Sigmoid colon (tissue), 7 donors: ENCODE measurements at regions of chrX and their contacts with region 1.

Region 1: DNA sequence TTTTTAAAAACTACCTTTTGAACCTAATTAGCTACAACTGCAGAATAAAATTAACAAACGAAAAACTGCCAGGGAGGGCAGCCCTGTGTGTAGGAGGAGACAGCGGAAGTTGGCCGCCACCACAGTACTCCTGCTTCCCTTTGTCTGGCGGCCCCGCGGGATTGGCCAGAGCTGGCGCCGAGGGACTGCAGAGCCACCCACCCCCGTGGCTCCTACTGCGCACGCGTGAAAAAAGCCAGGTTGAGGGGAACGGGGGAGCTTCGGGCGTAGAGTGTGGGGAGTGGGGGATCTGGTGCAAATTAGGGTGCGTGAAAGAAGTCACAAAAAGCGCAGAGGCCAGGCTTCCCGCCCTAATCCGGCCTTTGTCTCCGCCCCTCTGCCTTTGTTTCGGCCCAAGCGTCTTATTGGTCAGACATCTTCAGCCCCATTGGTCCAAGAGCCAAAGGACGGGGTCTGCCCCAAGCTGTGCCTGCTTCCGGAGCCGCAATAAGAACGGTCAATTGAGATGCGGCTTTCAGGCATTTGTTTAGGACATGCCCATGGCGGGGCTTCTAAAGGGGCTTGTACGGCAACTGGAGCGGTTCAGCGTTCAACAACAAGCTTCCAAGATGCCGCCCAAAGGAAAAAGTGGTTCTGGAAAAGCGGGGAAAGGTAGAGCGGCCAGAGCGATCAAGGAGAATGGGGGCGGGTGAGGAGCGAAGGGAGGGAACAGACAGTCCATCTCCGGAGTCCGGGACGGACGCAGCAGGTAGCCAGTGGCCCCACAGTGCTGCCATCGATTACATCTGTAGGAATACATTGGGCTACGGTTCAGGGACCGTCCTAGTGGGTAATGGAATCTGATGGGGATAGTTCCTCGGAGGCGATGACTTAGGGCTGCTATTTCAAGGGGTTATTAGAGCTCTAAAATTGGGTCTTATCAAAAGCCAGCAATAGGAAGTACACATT is at the start of gene PIN4:
- DNase-seq: peak; percentile 96
- H3K4me3 ChIP-seq: peak within 1 kb of the TSS; percentile 59 to 70 (median 61)
- H3K27ac ChIP-seq: peak within 1 kb of the TSS; percentile 72 to 80 (median 78)
- H3K4me1 ChIP-seq: peaks cover 0 to 20% (median 8%) of the 10 kb centered on the region in 4 donors
- H3K27me3 ChIP-seq: no peaks in the 10 kb centered on the region
- CTCF ChIP-seq: no peak
- EP300 ChIP-seq: no peak
- POLR2A ChIP-seq: peak in 1 of 2 donors; percentile 14
- total RNA-seq, gene PIN4: 6.9 to 15.3 (median 8.3) TPM

Region 2: DNA sequence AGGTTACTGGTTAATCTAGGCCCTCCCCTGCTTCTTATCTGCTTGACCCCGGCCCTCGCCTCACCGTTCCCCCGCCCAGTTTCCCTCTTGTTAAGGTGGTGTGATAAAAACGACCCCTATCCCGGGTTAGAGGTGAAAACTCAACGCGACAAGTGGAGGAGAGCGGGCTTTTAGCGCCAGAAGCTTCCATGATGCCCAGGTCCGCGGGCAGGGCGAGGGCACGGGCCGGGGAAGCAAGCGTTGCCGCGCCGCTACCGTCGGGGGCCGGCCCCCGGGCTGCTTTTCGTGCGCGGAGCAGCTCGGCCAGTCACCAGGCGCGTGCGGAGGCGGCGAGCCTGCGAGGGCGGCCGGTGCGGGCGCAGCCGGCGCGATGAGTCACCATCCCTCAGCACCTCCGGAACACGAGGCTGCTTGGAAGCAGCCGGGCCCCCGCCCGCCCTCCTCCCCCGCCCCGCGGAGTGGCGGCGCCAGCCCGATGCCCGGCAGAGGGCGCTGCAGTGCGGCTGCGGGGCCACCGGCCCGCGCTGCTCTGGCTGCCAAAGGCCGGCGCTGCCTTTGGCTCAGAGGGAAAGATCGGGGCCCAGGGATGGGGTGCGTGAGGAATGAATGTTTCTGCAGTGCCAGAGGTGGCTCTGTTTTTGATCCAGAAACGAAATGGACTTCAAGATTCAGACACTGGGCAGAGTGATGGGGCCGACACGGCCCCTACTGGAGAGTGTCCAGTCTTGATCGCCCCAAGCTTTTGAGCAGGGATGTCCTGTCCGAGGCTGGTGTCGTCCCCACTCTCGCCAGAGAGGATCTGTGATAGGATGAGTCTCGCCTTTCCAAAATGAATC is 163.0 kb before region 1 on chrX:
- intact Hi-C with region 1: loop called (anchors 5 kb)
- DNase-seq: peak; percentile 94
- H3K4me3 ChIP-seq: peak overlapping the region in 3 of 4 donors; percentile 24 to 40 (median 25)
- H3K27ac ChIP-seq: peak overlapping the region; percentile 72 to 82 (median 78)
- H3K4me1 ChIP-seq: peaks cover 0 to 31% (median 18%) of the 10 kb centered on the region in 4 donors
- H3K27me3 ChIP-seq: no peaks in the 10 kb centered on the region
- CTCF ChIP-seq: peak in 2 of 4 experiments; percentile 24 to 74
- EP300 ChIP-seq: peak in 1 of 4 donors; percentile 25
- POLR2A ChIP-seq: no peak

Region 3: GRCh38 chrX:72100824-72101351 is 80.6 kb before region 1 on chrX:
- intact Hi-C with region 1: no loop called
- DNase-seq: no peak
- H3K4me3 ChIP-seq: no peak overlapping the region
- H3K27ac ChIP-seq: peak overlapping the region in 1 of 4 donors; percentile 7
- H3K4me1 ChIP-seq: peaks cover 0 to 11% (median 0%) of the 10 kb centered on the region in 4 donors
- H3K27me3 ChIP-seq: no peaks in the 10 kb centered on the region
- CTCF ChIP-seq: no peak
- EP300 ChIP-seq: no peak
- POLR2A ChIP-seq: no peak

Region 4: DNA sequence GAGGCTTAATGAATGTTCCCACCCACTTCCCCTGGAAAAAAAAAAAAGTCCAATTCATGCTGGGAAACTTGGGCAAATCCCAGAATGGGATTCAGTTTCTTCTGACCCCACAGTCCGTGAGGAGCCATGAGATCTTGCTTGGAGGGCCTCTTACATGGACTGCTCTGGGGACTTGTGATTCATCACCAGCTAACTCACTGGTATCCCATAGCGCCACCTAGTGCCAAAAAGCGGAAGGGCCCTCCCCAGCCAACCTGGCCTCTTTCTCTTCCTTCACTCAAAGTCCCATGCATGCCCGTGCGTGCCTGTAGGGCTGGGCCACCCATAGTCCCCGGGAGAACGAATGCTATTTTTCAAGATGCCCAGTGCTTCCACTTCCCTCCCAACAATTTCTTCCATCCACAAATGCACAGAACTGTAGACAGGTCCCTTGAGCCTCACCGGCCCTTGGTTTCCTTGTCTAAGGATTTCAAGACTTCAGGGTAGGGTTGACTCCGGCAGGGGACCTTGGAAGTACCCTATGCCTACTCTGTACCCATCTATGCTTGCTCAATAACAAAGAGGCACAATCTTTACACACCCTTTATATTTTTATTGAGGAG is 54.8 kb before region 1 on chrX:
- intact Hi-C with region 1: loop called (anchors 2 kb)
- DNase-seq: peak; percentile 92
- H3K4me3 ChIP-seq: no peak overlapping the region
- H3K27ac ChIP-seq: peak overlapping the region; percentile 70 to 79 (median 76)
- H3K4me1 ChIP-seq: peaks cover 0 to 65% (median 45%) of the 10 kb centered on the region in 4 donors
- H3K27me3 ChIP-seq: peaks cover 0 to 3% (median 0%) of the 10 kb centered on the region in 3 donors
- CTCF ChIP-seq: peak; percentile 57 to 76 (median 72)
- EP300 ChIP-seq: no peak
- POLR2A ChIP-seq: no peak

Region 5: DNA sequence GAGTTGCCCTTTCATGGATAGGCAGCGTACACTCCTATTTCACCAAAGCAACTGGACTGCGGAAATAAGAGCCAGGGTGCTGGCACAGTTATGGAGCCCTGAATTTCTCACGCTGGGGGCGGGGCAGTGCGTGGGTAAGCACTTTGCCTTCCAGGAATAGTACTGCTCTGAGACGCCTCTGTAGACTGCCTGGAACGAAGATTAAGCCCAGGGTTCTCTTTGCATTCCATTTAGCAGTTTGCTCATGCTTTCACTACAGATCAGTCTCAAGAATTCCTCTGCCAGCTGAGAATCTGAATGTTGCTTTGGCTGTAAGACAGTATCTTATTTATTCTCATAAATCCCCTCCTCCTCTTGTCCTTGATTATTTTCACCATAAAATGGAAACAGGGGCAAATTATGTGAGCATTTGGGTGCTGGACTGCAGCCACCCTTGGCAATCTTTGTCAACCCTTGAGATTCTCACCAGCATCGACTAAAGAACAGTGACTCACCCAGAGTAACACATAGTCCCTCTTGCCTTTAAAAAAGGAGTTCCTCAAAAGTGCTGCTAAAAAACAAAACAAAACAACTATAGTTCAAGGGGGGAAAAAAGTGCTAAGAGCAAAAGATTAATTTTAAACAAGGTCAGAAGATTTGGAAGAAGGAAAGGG is 213.2 kb after region 1 on chrX:
- intact Hi-C with region 1: no loop called
- DNase-seq: no peak
- H3K4me3 ChIP-seq: no peak overlapping the region
- H3K27ac ChIP-seq: peak overlapping the region in 2 of 4 donors; percentile 42 to 57
- H3K4me1 ChIP-seq: peaks cover 0 to 22% (median 10%) of the 10 kb centered on the region in 4 donors
- H3K27me3 ChIP-seq: no peaks in the 10 kb centered on the region
- CTCF ChIP-seq: no peak
- EP300 ChIP-seq: no peak
- POLR2A ChIP-seq: no peak